Activated CD4-positive, alpha-beta T cell treated with anti-CD3 and anti-CD28 coated beads, Interleukin-2, amount 10 ng/mL, durations not matched to agents 24 days and 14 days (primary cell): ENCODE measurements at regions of chr7 and their contacts with region 1.

Region 1: GRCh38 chr7:7968543-7969305 is at the start of gene GLCCI1:
- DNase-seq: peak; percentile 99
- H3K4me3 Mint-ChIP-seq: peak within 1 kb of the TSS; percentile 86
- H3K27ac Mint-ChIP-seq: peak within 1 kb of the TSS; percentile 89
- H3K4me1 Mint-ChIP-seq: peaks cover 16% of the 10 kb centered on the region
- H3K27me3 Mint-ChIP-seq: no peaks in the 10 kb centered on the region
- total RNA-seq, gene GLCCI1: 10.1 and 10.9 TPM in 2 replicates

Region 2: GRCh38 chr7:7640221-7641128 is 328.2 kb before region 1 on chr7 and contains the start of gene UMAD1:
- intact Hi-C with region 1: loop called (anchors 1 kb)
- DNase-seq: peak; percentile 99
- H3K4me3 Mint-ChIP-seq: peak within 1 kb of the TSS; percentile 97
- H3K27ac Mint-ChIP-seq: peak within 1 kb of the TSS; percentile 97
- H3K4me1 Mint-ChIP-seq: peaks cover 31% of the 10 kb centered on the region
- H3K27me3 Mint-ChIP-seq: no peaks in the 10 kb centered on the region
- total RNA-seq, gene UMAD1: 11.8 and 12.4 TPM in 2 replicates

Region 3: GRCh38 chr7:7920481-7920880 is 48.2 kb before region 1 on chr7:
- intact Hi-C with region 1: loop called (anchors 1 kb)
- DNase-seq: peak; percentile 73
- H3K4me3 Mint-ChIP-seq: peak overlapping the region; percentile 0
- H3K27ac Mint-ChIP-seq: no peak overlapping the region
- H3K4me1 Mint-ChIP-seq: peaks cover 30% of the 10 kb centered on the region
- H3K27me3 Mint-ChIP-seq: no peaks in the 10 kb centered on the region

Region 4: DNA sequence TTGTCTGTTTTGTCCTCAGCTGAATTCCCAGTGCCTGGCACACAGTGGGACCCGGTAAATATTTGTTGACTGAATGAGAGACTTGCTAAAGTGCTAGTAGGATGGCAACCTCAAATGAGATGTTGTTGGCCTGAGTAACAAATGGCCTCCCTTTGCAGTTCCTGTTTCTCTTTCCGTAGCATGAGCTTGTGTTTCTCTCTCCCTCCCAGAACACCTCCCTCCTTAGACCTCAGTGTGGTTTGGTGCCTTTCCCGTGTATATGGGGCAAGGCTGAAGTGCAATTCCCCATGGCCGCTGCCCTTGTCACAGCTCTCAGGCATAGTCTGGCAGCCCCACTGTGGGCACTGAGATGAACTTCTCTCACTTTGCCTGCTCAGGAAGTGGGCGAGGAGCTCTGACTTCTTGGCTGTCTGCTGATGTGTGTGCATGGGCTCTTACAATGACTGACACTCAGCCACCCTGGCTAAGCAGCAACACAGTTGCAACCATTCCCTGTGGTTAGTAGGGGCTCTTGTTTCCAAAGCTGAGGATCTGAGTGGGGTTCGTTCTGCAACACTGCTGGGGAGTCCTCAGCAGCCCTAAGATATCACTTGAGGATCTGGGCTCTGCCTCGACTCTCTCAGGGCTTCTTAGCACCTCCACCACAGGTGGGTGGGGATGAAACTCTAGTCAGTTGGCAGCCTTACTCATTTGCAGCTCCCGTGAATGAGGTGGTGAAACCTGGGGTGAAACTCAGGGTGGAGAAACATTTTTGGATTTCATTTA is 157.1 kb after region 1 on chr7:
- intact Hi-C with region 1: loop called (anchors 1 kb)
- DNase-seq: peak; percentile 91
- H3K4me3 Mint-ChIP-seq: peak overlapping the region; percentile 76
- H3K27ac Mint-ChIP-seq: peak overlapping the region; percentile 98
- H3K4me1 Mint-ChIP-seq: peaks cover 67% of the 10 kb centered on the region
- H3K27me3 Mint-ChIP-seq: no peaks in the 10 kb centered on the region

Region 5: GRCh38 chr7:8190119-8190895 is 221.6 kb after region 1 on chr7:
- intact Hi-C with region 1: loop called (anchors 1 kb)
- DNase-seq: peak; percentile 89
- H3K4me3 Mint-ChIP-seq: no peak overlapping the region
- H3K27ac Mint-ChIP-seq: no peak overlapping the region
- H3K4me1 Mint-ChIP-seq: peaks cover 31% of the 10 kb centered on the region
- H3K27me3 Mint-ChIP-seq: peaks cover 5% of the 10 kb centered on the region